Activated T-helper 1 cell treated with anti-CD3 and anti-CD28 coated beads, Interleukin-12 subunit alpha, Interleukin-12 subunit beta, Interleukin-2, Interleukin-4 antibody, amounts not matched to agents 30 ng/mL and 10 ng/mL and 1 ng/mL, durations not matched to agents 14 hours and 24 hours and 36 hours (primary cell): ENCODE measurements at regions of chr20 and their contacts with region 1.

Region 1: DNA sequence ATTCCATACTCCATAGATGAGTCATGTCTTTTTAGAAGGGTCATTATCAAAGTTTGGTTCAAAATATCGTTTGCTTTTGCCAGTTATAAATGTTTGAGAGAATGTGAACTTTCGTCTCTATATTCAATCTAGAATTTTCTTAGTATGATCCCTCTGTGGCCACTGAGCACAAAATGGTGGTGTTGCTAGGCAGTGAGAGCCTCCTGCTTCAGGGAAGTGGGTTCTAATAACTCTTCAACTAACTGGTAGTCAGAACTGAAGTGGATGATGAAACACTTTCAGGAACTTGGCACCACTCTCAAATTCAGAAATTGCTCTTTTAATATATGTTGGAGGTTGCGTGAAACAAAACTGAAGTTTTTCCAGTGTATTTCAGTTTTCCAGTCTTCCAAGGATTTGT is 125.0 kb upstream of the DOK5 start:
- DNase-seq: no peak
- H3K4me3 Mint-ChIP-seq: no peak overlapping the region
- H3K27ac Mint-ChIP-seq: peak overlapping the region; percentile 25
- H3K4me1 Mint-ChIP-seq: peaks cover 43% of the 10 kb centered on the region
- H3K27me3 Mint-ChIP-seq: no peaks in the 10 kb centered on the region

Region 2: GRCh38 chr20:54207743-54208547 is 142.5 kb before region 1 on chr20 and contains the start of gene PFDN4:
- intact Hi-C with region 1: loop called (anchors 5 kb)
- DNase-seq: peak; percentile 79
- H3K4me3 Mint-ChIP-seq: peak within 1 kb of the TSS; percentile 96
- H3K27ac Mint-ChIP-seq: peak within 1 kb of the TSS; percentile 99
- H3K4me1 Mint-ChIP-seq: peaks cover 31% of the 10 kb centered on the region
- H3K27me3 Mint-ChIP-seq: no peaks in the 10 kb centered on the region
- total RNA-seq, gene PFDN4: 72.6 and 75.8 TPM in 2 replicates

Region 3: GRCh38 chr20:54320115-54320607 is 30.3 kb before region 1 on chr20:
- intact Hi-C with region 1: loop called (anchors 1 kb)
- DNase-seq: no peak
- H3K4me3 Mint-ChIP-seq: no peak overlapping the region
- H3K27ac Mint-ChIP-seq: peak overlapping the region; percentile 67
- H3K4me1 Mint-ChIP-seq: peaks cover 40% of the 10 kb centered on the region
- H3K27me3 Mint-ChIP-seq: no peaks in the 10 kb centered on the region

Region 4: GRCh38 chr20:54335299-54335698 is 15.1 kb before region 1 on chr20:
- intact Hi-C with region 1: no loop called
- DNase-seq: no peak
- H3K4me3 Mint-ChIP-seq: no peak overlapping the region
- H3K27ac Mint-ChIP-seq: no peak overlapping the region
- H3K4me1 Mint-ChIP-seq: peaks cover 4% of the 10 kb centered on the region
- H3K27me3 Mint-ChIP-seq: no peaks in the 10 kb centered on the region

Region 5: DNA sequence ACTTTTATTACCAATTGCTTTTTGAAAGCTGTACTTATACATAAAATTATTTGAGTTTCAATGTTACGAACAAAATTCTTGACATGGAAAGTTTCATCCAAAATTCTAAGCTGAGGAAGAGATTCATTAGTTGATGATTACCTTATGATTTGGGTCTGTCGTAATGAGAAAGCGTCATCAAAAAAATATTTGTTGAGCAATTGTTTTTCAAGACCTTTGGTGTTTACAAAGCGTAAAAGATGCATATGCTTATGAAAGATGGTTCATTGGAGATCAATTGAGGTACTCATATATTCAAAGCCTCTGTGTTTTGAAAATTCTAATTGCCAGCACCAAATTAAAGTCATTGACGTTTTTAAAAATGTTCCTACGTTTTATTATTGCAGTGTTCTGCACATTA is 14.5 kb after region 1 on chr20:
- intact Hi-C with region 1: loop called (anchors 1 kb)
- DNase-seq: no peak
- H3K4me3 Mint-ChIP-seq: no peak overlapping the region
- H3K27ac Mint-ChIP-seq: no peak overlapping the region
- H3K4me1 Mint-ChIP-seq: peaks cover 10% of the 10 kb centered on the region
- H3K27me3 Mint-ChIP-seq: no peaks in the 10 kb centered on the region

Region 6: GRCh38 chr20:54382422-54382821 is 32.0 kb after region 1 on chr20:
- intact Hi-C with region 1: no loop called
- DNase-seq: no peak
- H3K4me3 Mint-ChIP-seq: no peak overlapping the region
- H3K27ac Mint-ChIP-seq: no peak overlapping the region
- H3K4me1 Mint-ChIP-seq: no peaks in the 10 kb centered on the region
- H3K27me3 Mint-ChIP-seq: no peaks in the 10 kb centered on the region

Region 7: DNA sequence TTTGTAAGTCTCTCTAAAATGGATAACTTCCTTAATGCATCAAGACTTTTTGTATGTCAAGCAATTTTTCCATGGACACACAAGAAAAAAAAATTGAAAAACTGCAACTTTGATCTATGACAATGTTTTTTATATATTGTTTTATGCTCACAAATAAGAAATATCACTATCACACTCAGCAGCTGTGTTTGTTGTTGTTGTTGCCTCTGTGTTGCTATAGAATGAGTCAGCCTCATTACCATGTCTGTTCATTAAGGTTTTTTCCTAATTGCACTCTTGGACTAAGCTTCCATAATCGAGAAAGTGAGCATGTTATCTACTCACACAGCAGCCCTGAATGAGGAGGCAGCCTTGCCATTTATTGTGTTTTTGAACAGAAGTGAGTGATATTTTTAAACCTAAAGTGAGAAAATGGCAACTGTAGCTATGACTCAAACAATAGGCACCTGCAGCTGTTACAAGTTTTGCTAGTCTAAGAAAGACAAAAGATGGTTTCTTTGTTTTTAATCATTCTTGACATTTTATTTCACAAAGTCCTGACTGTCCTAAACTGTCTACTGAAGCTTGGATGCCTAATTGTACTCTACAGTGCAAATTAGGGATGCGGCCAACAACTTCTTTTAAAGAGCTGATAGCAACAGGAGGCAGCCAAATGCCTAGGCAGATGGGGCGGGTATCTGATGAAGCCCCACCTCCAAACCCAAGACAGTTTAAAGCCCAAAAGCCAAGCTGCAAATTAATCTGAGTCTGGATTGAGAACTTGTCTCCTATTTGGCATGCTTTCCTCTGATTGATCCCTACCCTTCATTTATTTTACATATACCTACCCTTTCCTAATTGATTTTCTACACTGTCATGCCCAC is 47.1 kb after region 1 on chr20:
- intact Hi-C with region 1: no loop called
- DNase-seq: no peak
- H3K4me3 Mint-ChIP-seq: no peak overlapping the region
- H3K27ac Mint-ChIP-seq: no peak overlapping the region
- H3K4me1 Mint-ChIP-seq: no peaks in the 10 kb centered on the region
- H3K27me3 Mint-ChIP-seq: no peaks in the 10 kb centered on the region